ENCODE measurements at regions of chr13 and their contacts with region 1.

Region 1: DNA sequence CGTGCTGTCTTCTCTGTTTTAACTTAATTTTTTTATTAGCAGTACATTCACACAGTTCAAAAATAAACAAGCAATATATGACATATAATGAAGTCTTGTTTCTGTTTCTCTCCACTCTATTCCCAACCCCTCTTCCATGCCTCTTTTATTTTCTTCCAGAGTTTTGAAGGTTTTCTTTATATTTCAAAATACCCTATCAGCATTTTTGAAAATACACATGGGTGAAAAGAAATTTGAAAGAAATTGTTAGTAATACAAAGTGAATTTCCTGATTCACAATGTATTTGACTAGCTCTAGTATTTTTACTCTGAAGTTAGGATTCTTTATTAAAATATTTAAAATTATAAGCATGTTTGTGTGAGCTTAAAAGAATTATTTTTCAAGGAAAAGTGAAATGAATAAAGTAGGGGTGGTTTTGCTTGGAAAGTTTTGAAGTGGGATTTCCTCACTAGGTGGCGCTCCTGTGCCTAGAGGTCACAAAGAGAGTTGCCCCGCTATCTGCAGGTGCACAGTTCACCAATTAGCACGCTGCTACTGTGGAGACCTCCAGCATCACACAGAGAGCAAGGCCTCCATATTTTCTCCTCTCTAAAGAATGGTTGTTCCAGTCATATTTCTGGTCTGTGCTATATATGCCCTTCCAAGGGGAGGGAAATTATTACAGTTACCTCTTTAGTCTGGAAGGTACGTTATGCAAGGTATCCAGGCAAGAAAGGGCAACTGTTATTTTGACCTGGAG is 37.6 kb downstream of the SOX21 start:
- DNase-seq: peak; percentile 74 to 79 (median 75)
- H3K4me3 ChIP-seq: no peak overlapping the region
- H3K27ac ChIP-seq: no peak overlapping the region
- H3K4me1 ChIP-seq: no peaks in the 10 kb centered on the region
- H3K27me3 ChIP-seq: peaks cover 0 to 10% (median 7%) of the 10 kb centered on the region in 5 experiments

Region 2: DNA sequence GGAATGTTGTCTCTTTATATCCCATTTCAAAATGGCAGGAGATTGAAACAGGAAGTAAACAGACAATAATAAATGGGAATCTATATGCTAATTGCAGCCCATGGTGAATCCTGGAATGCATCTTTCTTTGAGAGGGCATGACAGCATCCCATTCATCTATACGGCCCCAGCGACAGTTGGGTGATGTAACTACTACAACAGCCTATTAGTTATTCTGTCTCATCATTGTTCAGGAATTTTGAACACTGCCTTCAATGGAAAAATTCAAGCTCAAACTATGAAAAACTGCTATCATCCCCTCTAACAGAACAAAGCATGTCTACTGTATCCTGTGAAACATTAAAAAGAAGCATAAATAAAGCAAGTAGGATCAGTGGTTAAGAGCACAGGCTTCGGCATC is 457.4 kb before region 1 on chr13:
- CTCF ChIA-PET with region 1: no interaction called
- POLR2A ChIA-PET with region 1: no interaction called
- DNase-seq: no peak
- H3K4me3 ChIP-seq: no peak overlapping the region
- H3K27ac ChIP-seq: no peak overlapping the region
- H3K4me1 ChIP-seq: peaks cover 5 to 17% (median 9%) of the 10 kb centered on the region in 4 experiments
- H3K27me3 ChIP-seq: no peaks in the 10 kb centered on the region

Region 3: GRCh38 chr13:94660695-94661326 is 14.0 kb before region 1 on chr13:
- CTCF ChIA-PET with region 1: interaction called, 25 read pairs
- POLR2A ChIA-PET with region 1: no interaction called
- DNase-seq: peak; percentile 58 to 74 (median 70)
- H3K4me3 ChIP-seq: peak overlapping the region in 2 of 7 experiments; percentile 43 to 52
- H3K27ac ChIP-seq: no peak overlapping the region
- H3K4me1 ChIP-seq: peaks cover 5 to 18% (median 12%) of the 10 kb centered on the region in 4 experiments
- H3K27me3 ChIP-seq: peaks cover 0 to 10% (median 3%) of the 10 kb centered on the region in 5 experiments